GM10248 (cell line): ENCODE measurements at regions of chr20 and their contacts with region 1.

Region 1: GRCh38 chr20:38863024-38863851 is 57.7 kb downstream of the PPP1R16B start:
- DNase-seq: peak; percentile 72
- CTCF ChIP-seq: no peak

Region 2: DNA sequence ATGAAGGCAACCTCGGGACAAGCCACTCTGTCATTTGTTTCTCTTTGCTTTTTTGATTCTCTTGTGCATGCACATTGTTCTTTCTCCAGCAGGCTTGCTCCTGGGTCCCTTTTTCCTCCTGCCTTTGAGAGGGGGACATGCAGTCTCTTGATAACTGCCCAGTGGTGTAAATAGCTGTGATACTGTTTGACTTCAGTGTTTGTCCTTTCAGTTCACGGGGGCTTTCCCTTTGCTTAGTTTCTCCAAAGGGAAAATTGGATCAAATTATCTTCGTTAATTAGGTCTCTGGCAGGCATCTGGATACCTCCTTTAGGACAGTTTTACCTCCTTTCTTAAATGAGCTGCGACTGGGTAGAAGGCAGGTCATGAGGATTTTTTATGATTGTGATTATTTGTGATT is 349.1 kb before region 1 on chr20:
- CTCF ChIA-PET with region 1: no interaction called
- POLR2A ChIA-PET with region 1: no interaction called
- DNase-seq: no peak
- CTCF ChIP-seq: no peak

Region 3: DNA sequence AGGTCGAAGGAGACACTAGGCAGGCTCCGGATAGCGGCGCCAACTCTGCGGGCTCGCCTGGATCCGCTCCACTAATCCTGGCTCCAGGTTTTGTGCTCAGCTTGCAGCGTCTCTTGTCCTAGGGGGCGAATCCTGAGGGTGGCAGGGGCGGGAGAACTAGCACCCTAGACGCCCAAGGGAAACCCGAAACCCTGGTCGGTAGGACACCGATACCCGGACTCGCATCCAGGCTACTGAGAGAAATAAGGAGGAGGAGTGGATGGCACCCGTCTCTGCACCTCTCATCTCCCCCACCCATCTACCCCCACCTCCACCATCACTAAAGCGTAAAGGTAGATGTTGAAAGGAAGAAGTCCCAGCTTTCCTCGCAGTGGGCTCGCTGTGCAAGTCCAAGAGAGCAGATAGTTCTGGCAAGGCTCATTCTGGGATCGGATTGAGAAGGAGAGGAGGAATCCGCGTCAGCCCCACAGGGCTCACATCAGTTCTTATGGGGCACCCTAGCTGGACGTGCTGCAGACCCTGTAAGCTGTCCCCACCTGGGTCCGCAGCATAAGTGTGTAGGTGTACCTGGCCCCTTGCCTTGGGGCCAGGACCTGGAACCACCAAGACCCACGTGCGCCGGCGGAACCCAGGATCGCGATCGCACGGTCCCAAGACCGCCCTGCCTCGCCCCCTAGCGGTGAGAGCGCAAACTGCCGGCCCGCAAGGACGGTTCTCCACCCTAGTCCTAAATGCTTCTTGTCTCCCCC is 132.1 kb before region 1 on chr20:
- CTCF ChIA-PET with region 1: no interaction called
- POLR2A ChIA-PET with region 1: no interaction called
- DNase-seq: peak; percentile 82
- CTCF ChIP-seq: peak; percentile 96

Region 4: DNA sequence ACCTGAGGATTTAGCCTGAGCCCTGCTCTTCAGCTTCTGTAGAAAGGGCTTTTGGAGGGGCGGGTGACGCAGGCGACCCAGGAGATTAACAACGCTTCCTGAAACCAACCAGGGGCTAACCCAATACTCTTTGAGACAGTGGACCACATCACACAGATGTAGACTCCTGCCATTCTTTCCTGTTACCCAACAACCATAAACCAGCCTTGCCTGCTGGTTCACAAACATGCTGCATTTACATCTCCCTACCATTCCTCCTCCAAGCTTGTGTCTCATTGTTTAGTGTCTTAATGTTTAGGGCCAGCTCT is 29.4 kb before region 1 on chr20:
- CTCF ChIA-PET with region 1: interaction called, 28 read pairs
- POLR2A ChIA-PET with region 1: no interaction called
- DNase-seq: peak; percentile 36
- CTCF ChIP-seq: no peak

Region 5: GRCh38 chr20:38842558-38842981 is 20.7 kb before region 1 on chr20:
- CTCF ChIA-PET with region 1: interaction called, 102 read pairs
- POLR2A ChIA-PET with region 1: interaction called, 3 read pairs
- DNase-seq: peak; percentile 88
- CTCF ChIP-seq: no peak

Region 6: GRCh38 chr20:38847840-38848239 is 15.4 kb before region 1 on chr20:
- CTCF ChIA-PET with region 1: interaction called, 102 read pairs
- POLR2A ChIA-PET with region 1: no interaction called
- DNase-seq: no peak
- CTCF ChIP-seq: no peak

Region 7: GRCh38 chr20:38875175-38875993 is 12.1 kb after region 1 on chr20:
- CTCF ChIA-PET with region 1: interaction called, 122 read pairs
- POLR2A ChIA-PET with region 1: no interaction called
- DNase-seq: peak; percentile 83
- CTCF ChIP-seq: no peak

Region 8: GRCh38 chr20:39036011-39036410 is 172.8 kb after region 1 on chr20:
- CTCF ChIA-PET with region 1: no interaction called
- POLR2A ChIA-PET with region 1: no interaction called
- DNase-seq: no peak
- CTCF ChIP-seq: no peak

Region 9: DNA sequence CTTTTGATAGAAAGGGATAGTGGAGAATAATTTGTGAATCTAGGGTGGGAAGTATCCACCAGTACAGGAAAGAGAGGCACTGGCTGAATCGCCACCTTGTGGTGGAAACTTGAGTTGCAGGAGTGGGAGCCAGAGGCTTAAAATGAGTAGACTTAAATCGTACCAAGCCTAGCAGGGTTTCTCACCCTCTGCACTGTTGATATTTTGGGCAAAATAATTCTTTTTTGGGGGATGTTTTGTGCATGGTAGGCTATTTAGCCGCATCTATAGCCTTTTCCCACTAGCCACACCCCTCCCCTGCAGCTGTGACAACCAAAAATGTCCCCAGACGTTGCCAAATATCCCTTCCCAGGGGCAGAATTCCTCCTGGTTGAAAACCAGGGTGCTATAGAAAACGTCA is 218.0 kb after region 1 on chr20:
- CTCF ChIA-PET with region 1: no interaction called
- POLR2A ChIA-PET with region 1: no interaction called
- DNase-seq: peak; percentile 80
- CTCF ChIP-seq: peak; percentile 86